ENCODE measurements at regions of chr3 and their contacts with region 1.

Region 1: GRCh38 chr3:51682079-51682478 is 11.0 kb downstream of the TEX264 start:
- DNase-seq: peak; percentile 86
- H3K4me3 Mint-ChIP-seq: peak overlapping the region; percentile 66
- H3K27ac Mint-ChIP-seq: peak overlapping the region; percentile 84
- H3K4me1 Mint-ChIP-seq: peaks cover 100% of the 10 kb centered on the region
- H3K27me3 Mint-ChIP-seq: no peaks in the 10 kb centered on the region

Region 2: DNA sequence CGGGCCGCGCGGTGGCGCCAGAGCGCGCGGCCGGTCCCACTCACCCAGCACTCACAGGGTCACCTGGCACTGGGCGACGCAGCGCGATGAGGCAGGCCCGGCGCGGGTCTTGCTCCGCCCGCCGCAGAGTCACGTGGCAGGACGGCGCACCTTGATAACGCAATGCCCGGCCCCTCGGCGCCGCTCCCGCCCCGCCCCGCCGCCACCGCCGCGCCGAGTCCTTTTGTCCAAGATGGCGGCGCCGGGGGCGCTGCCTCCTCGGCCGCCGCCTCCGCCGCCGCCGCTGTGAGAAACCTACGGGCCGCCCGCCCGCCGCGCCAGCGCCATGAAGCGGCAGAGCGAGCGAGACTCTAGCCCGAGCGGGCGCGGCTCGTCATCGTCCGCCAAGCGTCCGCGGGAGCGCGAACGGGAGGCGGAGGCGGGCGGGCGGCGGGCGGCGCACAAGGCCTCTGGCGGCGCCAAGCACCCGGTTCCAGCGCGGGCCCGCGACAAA is 291.0 kb before region 1 on chr3 and contains the start of gene RBM15B:
- CTCF ChIA-PET with region 1: interaction called, 23 read pairs
- POLR2A ChIA-PET with region 1: interaction called, 9 read pairs
- DNase-seq: peak; percentile 98
- H3K4me3 Mint-ChIP-seq: peak within 1 kb of the TSS; percentile 83
- H3K27ac Mint-ChIP-seq: peak within 1 kb of the TSS; percentile 88
- H3K4me1 Mint-ChIP-seq: peaks cover 82% of the 10 kb centered on the region
- H3K27me3 Mint-ChIP-seq: no peaks in the 10 kb centered on the region
- total RNA-seq, gene RBM15B: 24.5 to 25.4 TPM

Region 3: DNA sequence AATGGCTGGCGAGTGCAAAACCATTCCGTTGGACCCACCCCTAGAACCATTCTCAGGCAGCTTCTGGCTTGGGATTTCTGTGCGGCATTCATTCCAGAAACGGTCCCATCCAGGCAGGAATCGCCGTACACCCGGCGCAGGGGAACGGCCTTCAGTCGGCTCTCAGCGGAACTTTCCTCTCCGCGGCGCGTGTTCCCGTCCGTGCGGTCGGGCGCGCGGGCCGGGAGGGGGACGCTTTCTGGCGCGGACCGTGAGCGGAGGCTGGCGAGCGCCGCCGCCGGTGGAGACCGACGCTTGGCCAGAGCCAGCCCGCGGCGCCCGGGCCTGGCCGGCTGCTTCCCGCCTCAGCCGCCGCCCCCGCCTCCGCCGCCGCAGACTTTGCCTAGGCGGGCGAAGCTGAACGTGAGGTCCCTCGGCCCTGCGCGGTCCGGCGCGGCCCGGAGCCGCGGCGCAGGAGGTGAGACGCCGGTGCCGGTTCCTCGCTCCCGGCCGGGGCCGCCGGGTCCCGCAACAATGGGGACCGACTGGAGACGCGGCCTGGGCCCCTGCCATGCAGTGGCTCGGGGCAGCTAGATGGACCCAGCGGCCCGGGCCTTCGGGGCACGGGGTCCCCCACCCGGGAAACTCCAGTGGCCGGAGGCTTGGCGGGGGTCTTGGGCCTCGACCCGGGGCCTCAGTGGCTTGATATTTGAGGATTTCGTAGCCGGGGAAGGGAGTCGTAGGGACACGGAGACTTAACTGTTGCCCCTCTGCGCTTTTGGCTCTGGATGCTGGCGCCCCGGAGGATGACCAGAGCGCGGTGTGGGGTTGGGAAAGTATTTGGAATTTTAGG is 143.4 kb before region 1 on chr3 and contains the start of gene RAD54L2:
- CTCF ChIA-PET with region 1: interaction called, 11 read pairs
- POLR2A ChIA-PET with region 1: interaction called, 20 read pairs
- DNase-seq: peak; percentile 79
- H3K4me3 Mint-ChIP-seq: peak within 1 kb of the TSS; percentile 89
- H3K27ac Mint-ChIP-seq: peak within 1 kb of the TSS; percentile 80
- H3K4me1 Mint-ChIP-seq: peaks cover 35% of the 10 kb centered on the region
- H3K27me3 Mint-ChIP-seq: no peaks in the 10 kb centered on the region
- total RNA-seq, gene RAD54L2: 30.4 to 30.5 TPM

Region 4: DNA sequence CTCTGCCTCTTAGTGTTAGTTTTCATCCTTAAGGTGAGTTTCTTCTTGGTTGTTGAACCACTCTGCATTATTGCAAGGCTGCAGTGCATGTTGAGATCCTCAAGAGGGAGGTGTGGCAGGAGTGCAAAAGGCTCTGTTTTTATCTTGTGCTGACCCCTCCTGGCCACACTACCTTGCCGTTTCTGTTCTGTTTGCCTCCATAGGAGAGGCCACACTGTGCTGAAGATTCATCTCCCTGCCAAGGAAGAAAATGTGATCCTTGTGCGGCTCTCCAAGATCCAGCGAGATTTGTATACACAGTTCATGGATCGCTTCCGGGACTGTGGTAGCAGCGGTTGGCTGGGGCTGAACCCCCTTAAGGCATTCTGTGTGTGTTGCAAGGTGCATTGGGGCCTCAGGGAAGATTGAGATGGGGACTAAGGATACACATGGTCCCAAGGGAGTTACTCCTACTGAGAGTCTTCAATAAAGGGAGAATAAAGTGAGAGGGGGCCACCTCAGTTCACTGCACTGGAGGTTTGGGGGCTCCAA is 44.1 kb before region 1 on chr3:
- CTCF ChIA-PET with region 1: interaction called, 53 read pairs
- POLR2A ChIA-PET with region 1: no interaction called
- DNase-seq: peak; percentile 46
- H3K4me3 Mint-ChIP-seq: no peak overlapping the region
- H3K27ac Mint-ChIP-seq: no peak overlapping the region
- H3K4me1 Mint-ChIP-seq: no peaks in the 10 kb centered on the region
- H3K27me3 Mint-ChIP-seq: no peaks in the 10 kb centered on the region

Region 5: GRCh38 chr3:51670823-51671733 is 11.0 kb before region 1 on chr3 and contains the start of gene TEX264:
- CTCF ChIA-PET with region 1: interaction called, 256 read pairs
- POLR2A ChIA-PET with region 1: interaction called, 140 read pairs
- DNase-seq: peak; percentile 95
- H3K4me3 Mint-ChIP-seq: peak within 1 kb of the TSS; percentile 93
- H3K27ac Mint-ChIP-seq: peak within 1 kb of the TSS; percentile 87
- H3K4me1 Mint-ChIP-seq: peaks cover 66% of the 10 kb centered on the region
- H3K27me3 Mint-ChIP-seq: no peaks in the 10 kb centered on the region
- total RNA-seq, gene TEX264: 103 to 108 TPM

Region 6: DNA sequence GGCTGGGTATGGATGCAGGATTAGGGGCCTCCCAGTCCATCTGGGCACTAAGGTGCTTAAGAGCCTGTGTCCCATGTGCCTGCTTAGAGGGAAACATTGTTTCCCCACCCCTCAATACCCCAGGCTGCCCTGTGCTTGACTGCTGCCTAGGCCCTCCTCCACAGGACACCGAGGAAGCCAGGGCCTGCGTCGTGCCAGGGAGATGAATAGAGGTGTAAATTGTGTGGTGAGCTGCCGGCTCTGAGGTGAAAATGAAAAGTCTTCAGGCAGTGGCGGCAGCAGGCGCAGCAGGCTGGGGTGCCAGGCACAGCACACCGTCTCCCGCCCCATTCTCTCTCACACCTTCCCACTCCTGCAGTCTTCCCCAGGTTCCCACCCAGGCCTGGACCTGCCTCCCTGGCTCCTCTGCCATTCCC is 10.9 kb after region 1 on chr3:
- CTCF ChIA-PET with region 1: interaction called, 10 read pairs
- POLR2A ChIA-PET with region 1: interaction called, 5 read pairs
- DNase-seq: no peak
- H3K4me3 Mint-ChIP-seq: no peak overlapping the region
- H3K27ac Mint-ChIP-seq: no peak overlapping the region
- H3K4me1 Mint-ChIP-seq: peaks cover 26% of the 10 kb centered on the region
- H3K27me3 Mint-ChIP-seq: no peaks in the 10 kb centered on the region

Region 7: GRCh38 chr3:51799879-51800749 is 118.0 kb after region 1 on chr3:
- CTCF ChIA-PET with region 1: interaction called, 22 read pairs
- POLR2A ChIA-PET with region 1: interaction called, 10 read pairs
- DNase-seq: no peak
- H3K4me3 Mint-ChIP-seq: no peak overlapping the region
- H3K27ac Mint-ChIP-seq: no peak overlapping the region
- H3K4me1 Mint-ChIP-seq: peaks cover 60% of the 10 kb centered on the region
- H3K27me3 Mint-ChIP-seq: peaks cover 14% of the 10 kb centered on the region

Region 8: GRCh38 chr3:51813539-51813938 is 131.5 kb after region 1 on chr3:
- CTCF ChIA-PET with region 1: no interaction called
- POLR2A ChIA-PET with region 1: no interaction called
- DNase-seq: no peak
- H3K4me3 Mint-ChIP-seq: no peak overlapping the region
- H3K27ac Mint-ChIP-seq: no peak overlapping the region
- H3K4me1 Mint-ChIP-seq: peaks cover 8% of the 10 kb centered on the region
- H3K27me3 Mint-ChIP-seq: peaks cover 16% of the 10 kb centered on the region